Activated CD8-positive, alpha-beta T cell treated with anti-CD3 and anti-CD28 coated beads, Interleukin-2, amount 10 ng/mL, durations not matched to agents 7 days and 5 days (primary cell): ENCODE measurements at regions of chr2 and their contacts with region 1.

Region 1: GRCh38 chr2:112121682-112122254 is 16.4 kb upstream of the FBLN7 start:
- DNase-seq: peak; percentile 68
- ATAC-seq: no peak
- H3K4me3 Mint-ChIP-seq: no peak overlapping the region
- H3K27ac Mint-ChIP-seq: no peak overlapping the region
- H3K4me1 Mint-ChIP-seq: no peaks in the 10 kb centered on the region
- H3K27me3 Mint-ChIP-seq: no peaks in the 10 kb centered on the region

Region 2: DNA sequence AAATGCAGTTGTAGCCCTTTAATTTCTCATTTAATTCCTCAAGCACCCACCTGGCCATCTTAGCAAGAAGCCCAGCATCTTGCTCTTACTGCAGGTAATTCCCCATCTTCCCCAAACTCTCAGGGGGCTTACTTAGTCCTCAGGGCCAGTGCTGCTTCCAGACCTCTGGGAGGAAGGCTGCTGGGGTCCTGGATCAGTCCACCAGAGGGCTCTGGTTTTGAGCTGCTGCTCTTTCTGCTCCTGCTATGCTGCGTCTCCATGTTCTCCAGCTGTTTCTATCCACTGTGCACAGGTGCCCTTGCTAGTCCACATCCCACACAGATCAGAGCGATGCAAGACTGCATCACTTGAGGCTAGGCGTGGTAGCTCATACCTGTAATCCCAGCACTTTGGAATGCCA is 101.2 kb before region 1 on chr2:
- CTCF ChIA-PET with region 1: no interaction called
- POLR2A ChIA-PET with region 1: no interaction called
- DNase-seq: no peak
- ATAC-seq: no peak
- H3K4me3 Mint-ChIP-seq: no peak overlapping the region
- H3K27ac Mint-ChIP-seq: no peak overlapping the region
- H3K4me1 Mint-ChIP-seq: no peaks in the 10 kb centered on the region
- H3K27me3 Mint-ChIP-seq: peaks cover 24% of the 10 kb centered on the region

Region 3: GRCh38 chr2:112254466-112255239 is 132.9 kb after region 1 on chr2 and contains the start of gene ZC3H8:
- CTCF ChIA-PET with region 1: interaction called, 30 read pairs
- POLR2A ChIA-PET with region 1: no interaction called
- DNase-seq: peak; percentile 96
- ATAC-seq: peak; percentile 96
- H3K4me3 Mint-ChIP-seq: peak within 1 kb of the TSS; percentile 81
- H3K27ac Mint-ChIP-seq: peak within 1 kb of the TSS; percentile 94
- H3K4me1 Mint-ChIP-seq: peaks cover 26% of the 10 kb centered on the region
- H3K27me3 Mint-ChIP-seq: no peaks in the 10 kb centered on the region
- total RNA-seq, gene ZC3H8: 13.0 to 16.0 TPM